CD4-positive, alpha-beta memory T cell (primary cell): ENCODE measurements at regions of chr1 and their contacts with region 1.

Region 1: DNA sequence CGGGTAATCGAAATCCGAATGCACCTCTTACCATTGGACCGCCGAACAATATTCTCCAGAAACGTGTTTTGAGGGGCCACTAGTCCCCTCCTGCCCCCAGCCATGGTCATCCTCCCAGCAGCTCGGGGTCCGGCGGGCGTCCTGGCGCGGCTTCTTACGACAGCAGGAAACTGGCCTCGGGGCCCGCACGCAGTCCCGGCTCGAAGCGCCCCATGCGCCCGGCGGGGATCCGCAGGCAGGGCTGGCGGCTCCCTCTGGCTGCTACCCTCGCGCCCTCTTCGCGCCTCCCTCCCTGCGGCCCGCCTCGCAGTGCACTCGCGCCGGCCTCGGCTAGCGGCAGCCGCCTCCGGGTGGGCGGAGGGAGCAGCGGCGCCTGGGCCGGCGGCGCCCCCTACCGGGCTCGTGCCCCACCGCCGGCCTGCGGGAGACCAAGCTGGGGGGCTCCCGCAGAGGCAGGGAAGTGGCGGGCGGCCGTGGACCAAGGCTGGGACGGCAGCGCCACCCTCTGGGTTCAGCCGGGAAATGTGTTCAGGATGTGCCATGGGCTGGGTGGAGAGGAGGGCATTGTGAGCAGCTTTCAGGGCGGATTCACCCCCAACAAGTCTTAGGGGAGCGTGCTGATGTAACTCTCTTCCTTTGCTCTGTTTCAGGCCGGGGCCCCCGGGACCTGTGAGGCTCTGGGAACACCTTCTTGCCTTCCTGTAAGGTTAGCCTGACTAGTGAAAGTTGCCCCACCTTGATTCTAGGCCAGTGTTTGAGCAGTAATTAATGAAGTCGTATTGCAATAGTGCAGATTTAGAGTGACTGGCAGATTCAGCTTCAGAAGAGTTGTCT is at the start of gene KCNH1:
- DNase-seq: peak; percentile 67 to 76 (median 70)
- H3K4me3 ChIP-seq: peak within 1 kb of the TSS in 1 of 2 donors; percentile 19
- H3K4me3 Mint-ChIP-seq: peak within 1 kb of the TSS; percentile 74 to 83 (median 77)
- H3K27ac ChIP-seq: no peak within 1 kb of the TSS
- H3K27ac Mint-ChIP-seq: no peak within 1 kb of the TSS
- H3K4me1 ChIP-seq: peaks cover 17% of the 10 kb centered on the region
- H3K4me1 Mint-ChIP-seq: peaks cover 3 to 20% (median 7%) of the 10 kb centered on the region in 4 donors
- H3K27me3 ChIP-seq: peaks cover 17% of the 10 kb centered on the region
- H3K27me3 Mint-ChIP-seq: peaks cover 28 to 32% of the 10 kb centered on the region in 2 donors
- total RNA-seq, gene KCNH1: not detected

Region 2: GRCh38 chr1:210407207-210407886 is 726.7 kb before region 1 on chr1:
- CTCF ChIA-PET with region 1: interaction called, 19 read pairs
- POLR2A ChIA-PET with region 1: no interaction called
- intact Hi-C with region 1: loop called (anchors 1 kb)
- DNase-seq: peak; percentile 54 to 71 (median 62)
- H3K4me3 ChIP-seq: no peak overlapping the region
- H3K4me3 Mint-ChIP-seq: no peak overlapping the region
- H3K27ac ChIP-seq: no peak overlapping the region
- H3K27ac Mint-ChIP-seq: no peak overlapping the region
- H3K4me1 ChIP-seq: no peaks in the 10 kb centered on the region
- H3K4me1 Mint-ChIP-seq: peaks cover 0 to 2% (median under 1%) of the 10 kb centered on the region in 4 donors
- H3K27me3 ChIP-seq: no peaks in the 10 kb centered on the region
- H3K27me3 Mint-ChIP-seq: no peaks in the 10 kb centered on the region

Region 3: GRCh38 chr1:210448297-210448892 is 685.7 kb before region 1 on chr1:
- CTCF ChIA-PET with region 1: interaction called, 18 read pairs
- POLR2A ChIA-PET with region 1: no interaction called
- intact Hi-C with region 1: loop called (anchors 1 kb)
- DNase-seq: peak in 4 of 5 donors; percentile 10 to 18 (median 12)
- H3K4me3 ChIP-seq: no peak overlapping the region
- H3K4me3 Mint-ChIP-seq: no peak overlapping the region
- H3K27ac ChIP-seq: no peak overlapping the region
- H3K27ac Mint-ChIP-seq: no peak overlapping the region
- H3K4me1 ChIP-seq: peaks cover 14% of the 10 kb centered on the region
- H3K4me1 Mint-ChIP-seq: peaks cover 7 to 19% (median 12%) of the 10 kb centered on the region in 4 donors
- H3K27me3 ChIP-seq: no peaks in the 10 kb centered on the region
- H3K27me3 Mint-ChIP-seq: peaks cover 0 to under 1% of the 10 kb centered on the region in 2 donors

Region 4: GRCh38 chr1:210584439-210585113 is 549.5 kb before region 1 on chr1:
- CTCF ChIA-PET with region 1: interaction called, 5 read pairs
- POLR2A ChIA-PET with region 1: no interaction called
- intact Hi-C with region 1: loop called (anchors 1 kb)
- DNase-seq: peak; percentile 30 to 41 (median 32)
- H3K4me3 ChIP-seq: no peak overlapping the region
- H3K4me3 Mint-ChIP-seq: no peak overlapping the region
- H3K27ac ChIP-seq: no peak overlapping the region
- H3K27ac Mint-ChIP-seq: peak overlapping the region in 1 of 7 donors; percentile 5
- H3K4me1 ChIP-seq: no peaks in the 10 kb centered on the region
- H3K4me1 Mint-ChIP-seq: peaks cover 0 to 5% (median 0%) of the 10 kb centered on the region in 4 donors
- H3K27me3 ChIP-seq: no peaks in the 10 kb centered on the region
- H3K27me3 Mint-ChIP-seq: no peaks in the 10 kb centered on the region

Region 5: GRCh38 chr1:211476200-211476849 is 342.3 kb after region 1 on chr1:
- CTCF ChIA-PET with region 1: no interaction called
- POLR2A ChIA-PET with region 1: no interaction called
- intact Hi-C with region 1: loop called (anchors 2 kb)
- DNase-seq: peak; percentile 69 to 73 (median 71)
- H3K4me3 ChIP-seq: no peak overlapping the region
- H3K4me3 Mint-ChIP-seq: no peak overlapping the region
- H3K27ac ChIP-seq: no peak overlapping the region
- H3K27ac Mint-ChIP-seq: no peak overlapping the region
- H3K4me1 ChIP-seq: no peaks in the 10 kb centered on the region
- H3K4me1 Mint-ChIP-seq: peaks cover 3 to 6% (median 4%) of the 10 kb centered on the region in 4 donors
- H3K27me3 ChIP-seq: peaks cover 10% of the 10 kb centered on the region
- H3K27me3 Mint-ChIP-seq: peaks cover 14 to 25% of the 10 kb centered on the region in 2 donors

Region 6: DNA sequence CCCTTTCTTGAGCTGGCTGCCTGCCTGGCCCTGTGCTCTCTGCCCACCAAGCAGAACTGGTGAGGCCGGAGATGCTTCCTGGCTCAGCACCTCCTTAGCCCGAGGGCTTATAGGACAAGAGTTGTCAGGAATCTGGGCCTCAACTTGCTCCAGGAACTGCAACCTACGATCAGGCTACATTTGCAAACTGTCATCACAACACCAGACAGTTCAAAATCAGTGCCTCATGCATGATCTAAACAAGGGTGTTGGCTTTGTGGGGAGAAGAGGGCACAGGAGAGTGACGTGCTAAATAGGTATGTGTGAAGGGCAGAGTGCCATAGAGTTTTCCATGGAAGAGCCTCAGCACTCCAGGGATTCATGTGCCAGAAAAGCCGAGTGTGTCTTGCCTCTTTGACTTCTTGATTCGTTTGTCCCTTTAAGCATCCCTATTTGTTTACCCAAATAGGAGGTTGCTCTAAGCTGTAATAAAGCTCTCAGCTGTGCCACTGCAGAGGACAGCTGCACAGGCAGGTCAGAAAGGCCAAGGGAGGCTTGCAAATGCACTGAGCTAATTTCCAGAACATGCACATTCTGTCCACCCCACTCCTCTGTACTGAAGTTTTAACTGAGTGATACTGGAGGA is 571.5 kb after region 1 on chr1:
- CTCF ChIA-PET with region 1: no interaction called
- POLR2A ChIA-PET with region 1: no interaction called
- intact Hi-C with region 1: no loop called
- DNase-seq: no peak
- H3K4me3 ChIP-seq: no peak overlapping the region
- H3K4me3 Mint-ChIP-seq: no peak overlapping the region
- H3K27ac ChIP-seq: no peak overlapping the region
- H3K27ac Mint-ChIP-seq: peak overlapping the region in 1 of 7 donors; percentile 28
- H3K4me1 ChIP-seq: no peaks in the 10 kb centered on the region
- H3K4me1 Mint-ChIP-seq: no peaks in the 10 kb centered on the region
- H3K27me3 ChIP-seq: no peaks in the 10 kb centered on the region
- H3K27me3 Mint-ChIP-seq: peaks cover 0 to 3% of the 10 kb centered on the region in 2 donors